ENCODE measurements at regions of chr1 and their contacts with region 1.

Region 1: GRCh38 chr1:17125756-17126237 is 6.5 kb upstream of the PADI2 start:
- DNase-seq: peak; percentile 90
- ATAC-seq: peak; percentile 83
- H3K4me3 ChIP-seq: no peak overlapping the region
- H3K27ac ChIP-seq: no peak overlapping the region; the same call in 1 of the 2 replicates
- H3K4me1 ChIP-seq: peaks cover 18% of the 10 kb centered on the region
- H3K27me3 ChIP-seq: no peaks in the 10 kb centered on the region
- CTCF ChIP-seq: peak; percentile 93

Region 2: DNA sequence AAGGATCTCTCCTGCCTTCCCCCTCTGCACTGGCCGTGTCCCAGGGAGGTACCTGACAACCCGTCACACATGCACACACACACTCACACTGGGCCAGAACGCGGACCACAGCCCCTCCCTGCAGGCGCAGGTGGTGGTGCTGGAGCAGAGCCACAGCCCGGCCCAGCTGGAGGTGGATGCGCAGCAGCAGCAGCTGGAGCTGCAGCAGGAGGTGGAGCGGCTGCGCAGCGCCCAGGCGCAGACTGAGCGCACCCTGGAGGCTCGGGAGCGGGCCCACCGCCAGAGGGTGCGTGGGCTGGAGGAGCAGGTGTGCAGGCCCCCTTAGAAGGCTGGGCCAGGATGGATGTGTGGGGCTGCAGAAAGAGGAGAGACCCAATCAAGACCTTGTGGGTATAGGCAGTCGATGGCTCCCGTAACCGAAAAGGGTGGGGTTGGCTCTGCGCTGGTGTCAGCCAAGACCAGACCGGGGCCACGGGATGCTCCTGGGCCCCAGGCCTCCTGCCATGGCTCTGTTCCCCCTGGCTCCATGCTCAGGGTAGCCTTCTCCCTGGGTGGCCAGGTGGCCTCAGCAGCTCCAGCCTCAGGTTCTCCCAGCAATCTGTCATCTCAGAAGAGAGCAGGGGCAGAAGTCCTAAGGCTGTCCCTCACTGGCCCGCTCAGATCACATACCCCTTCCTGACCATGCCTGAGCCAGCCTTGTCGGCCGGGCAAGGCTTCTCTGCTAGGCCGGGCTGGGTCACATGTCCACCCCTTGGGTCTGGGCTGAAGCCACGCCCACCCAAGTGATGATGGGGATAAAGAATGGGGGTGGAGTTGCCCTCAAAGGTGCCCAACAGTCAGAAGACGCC is 154.2 kb before region 1 on chr1:
- CTCF ChIA-PET with region 1: no interaction called
- POLR2A ChIA-PET with region 1: no interaction called
- intact Hi-C with region 1: no loop called
- DNase-seq: no peak
- ATAC-seq: no peak
- H3K4me3 ChIP-seq: no peak overlapping the region
- H3K27ac ChIP-seq: no peak overlapping the region
- H3K4me1 ChIP-seq: no peaks in the 10 kb centered on the region
- H3K27me3 ChIP-seq: no peaks in the 10 kb centered on the region
- CTCF ChIP-seq: no peak

Region 3: GRCh38 chr1:17059739-17060460 is 65.9 kb before region 1 on chr1:
- CTCF ChIA-PET with region 1: no interaction called
- POLR2A ChIA-PET with region 1: no interaction called
- intact Hi-C with region 1: loop called (anchors 2 kb)
- DNase-seq: peak; percentile 78
- ATAC-seq: peak; percentile 97
- H3K4me3 ChIP-seq: no peak overlapping the region
- H3K27ac ChIP-seq: no peak overlapping the region
- H3K4me1 ChIP-seq: 0 out of 2 replicates have a peak, but pooled peaks cover 5% of the 10 kb centered on the region
- H3K27me3 ChIP-seq: no peaks in the 10 kb centered on the region
- CTCF ChIP-seq: peak; percentile 86

Region 4: GRCh38 chr1:17186216-17186909 is 60.6 kb after region 1 on chr1:
- CTCF ChIA-PET with region 1: no interaction called
- POLR2A ChIA-PET with region 1: no interaction called
- intact Hi-C with region 1: loop called (anchors 5 kb)
- DNase-seq: no peak
- ATAC-seq: no peak
- H3K4me3 ChIP-seq: no peak overlapping the region
- H3K27ac ChIP-seq: no peak overlapping the region
- H3K4me1 ChIP-seq: peaks cover 28% of the 10 kb centered on the region
- H3K27me3 ChIP-seq: no peaks in the 10 kb centered on the region
- CTCF ChIP-seq: no peak

Region 5: DNA sequence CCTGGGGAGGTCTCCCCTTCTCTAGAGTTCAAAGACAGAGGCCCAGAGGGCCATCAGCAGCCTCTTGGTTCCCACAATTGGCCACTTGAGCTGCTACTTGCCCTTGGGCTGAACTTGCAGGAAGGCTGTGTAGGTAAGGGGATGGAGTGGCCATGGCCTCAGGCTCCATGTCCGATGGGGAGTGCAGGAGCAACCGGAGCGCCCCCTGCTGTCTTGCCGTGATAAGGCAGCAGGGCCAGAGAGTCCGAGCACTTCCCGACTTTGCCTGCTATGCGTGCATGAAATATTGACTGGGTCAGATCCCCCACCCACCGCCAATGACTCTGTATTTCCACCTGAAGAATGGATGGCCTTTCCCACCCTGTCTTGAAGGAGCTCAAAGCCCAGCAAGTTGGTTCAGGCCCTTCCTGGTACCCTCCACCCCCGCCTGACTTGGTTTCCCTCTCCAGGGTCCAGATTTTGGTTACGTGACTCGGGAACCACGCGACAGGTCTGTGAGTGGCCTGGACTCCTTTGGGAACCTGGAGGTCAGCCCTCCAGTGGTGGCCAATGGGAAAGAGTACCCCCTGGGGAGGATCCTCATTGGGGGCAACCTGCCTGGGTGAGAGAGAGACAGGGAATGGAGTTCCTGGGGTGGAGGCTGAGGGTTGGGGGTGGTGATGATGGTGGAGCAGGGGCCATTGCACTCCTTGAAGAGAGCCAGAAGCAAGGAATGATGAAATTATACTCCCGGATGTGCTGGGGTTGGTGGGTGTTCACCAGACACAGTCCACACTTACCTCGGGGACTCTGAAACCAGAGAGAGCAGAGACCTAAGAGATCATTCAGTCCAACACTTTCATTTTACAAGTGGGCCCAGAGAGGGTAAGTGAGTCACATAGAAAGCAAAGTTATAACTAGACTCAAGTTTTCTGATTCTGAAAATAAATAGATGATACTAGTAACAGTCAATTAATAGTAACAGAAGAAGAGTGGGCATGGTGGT is 148.7 kb after region 1 on chr1:
- CTCF ChIA-PET with region 1: interaction called, 19 read pairs
- POLR2A ChIA-PET with region 1: no interaction called
- intact Hi-C with region 1: no loop called
- DNase-seq: peak; percentile 65
- ATAC-seq: peak; percentile 51; the same call in 1 of the 2 replicates
- H3K4me3 ChIP-seq: no peak overlapping the region
- H3K27ac ChIP-seq: no peak overlapping the region
- H3K4me1 ChIP-seq: peaks cover 10% of the 10 kb centered on the region
- H3K27me3 ChIP-seq: no peaks in the 10 kb centered on the region
- CTCF ChIP-seq: peak; percentile 84

Region 6: DNA sequence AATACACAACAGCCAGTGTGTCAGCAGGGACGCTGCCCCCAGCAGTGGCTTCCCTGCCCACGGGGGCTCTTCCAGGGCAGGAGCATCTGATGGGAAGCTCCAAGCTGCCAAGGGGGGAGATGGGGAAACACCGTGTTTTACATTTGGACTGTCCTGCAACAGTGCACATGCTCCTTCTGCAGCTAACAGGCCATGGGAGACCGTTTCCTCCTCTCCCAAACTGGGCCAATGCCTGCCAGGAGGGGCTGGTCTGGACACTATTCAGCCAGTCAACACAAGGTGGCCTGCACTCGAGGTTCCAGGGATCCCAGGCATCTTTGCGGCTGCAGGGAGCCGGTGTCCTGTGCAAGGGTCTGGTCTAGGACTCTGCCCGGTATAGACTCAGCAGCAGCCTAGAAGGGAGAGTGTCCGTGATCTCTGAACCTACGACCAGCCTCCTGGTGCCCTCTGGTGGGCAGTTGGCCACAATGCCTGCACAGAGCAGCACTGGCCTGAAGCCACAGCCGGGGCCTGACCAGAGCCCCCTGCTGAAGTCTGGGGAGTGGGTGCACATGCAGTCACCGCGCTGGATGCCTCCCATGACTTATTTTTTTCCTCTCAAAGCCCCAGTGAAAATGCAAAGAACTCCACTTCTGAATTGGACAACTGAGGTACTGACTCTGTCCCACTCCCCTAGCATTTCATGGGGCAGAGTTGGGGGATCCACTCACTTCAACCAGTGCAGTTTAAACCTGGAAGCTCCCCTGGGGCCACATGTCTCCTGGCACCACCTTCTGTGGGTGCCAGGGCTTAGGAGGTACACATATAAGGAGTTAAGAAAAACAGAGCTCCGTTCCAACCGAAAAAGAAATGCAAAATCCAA is 280.3 kb after region 1 on chr1:
- CTCF ChIA-PET with region 1: no interaction called
- POLR2A ChIA-PET with region 1: no interaction called
- intact Hi-C with region 1: loop called (anchors 10 kb)
- DNase-seq: peak; percentile 65
- ATAC-seq: peak; percentile 80
- H3K4me3 ChIP-seq: no peak overlapping the region
- H3K27ac ChIP-seq: no peak overlapping the region
- H3K4me1 ChIP-seq: peaks cover 11% of the 10 kb centered on the region
- H3K27me3 ChIP-seq: no peaks in the 10 kb centered on the region
- CTCF ChIP-seq: peak; percentile 88